Gastrocnemius medialis (tissue), 4 donors: ENCODE measurements at regions of chr4 and their contacts with region 1.

Region 1: DNA sequence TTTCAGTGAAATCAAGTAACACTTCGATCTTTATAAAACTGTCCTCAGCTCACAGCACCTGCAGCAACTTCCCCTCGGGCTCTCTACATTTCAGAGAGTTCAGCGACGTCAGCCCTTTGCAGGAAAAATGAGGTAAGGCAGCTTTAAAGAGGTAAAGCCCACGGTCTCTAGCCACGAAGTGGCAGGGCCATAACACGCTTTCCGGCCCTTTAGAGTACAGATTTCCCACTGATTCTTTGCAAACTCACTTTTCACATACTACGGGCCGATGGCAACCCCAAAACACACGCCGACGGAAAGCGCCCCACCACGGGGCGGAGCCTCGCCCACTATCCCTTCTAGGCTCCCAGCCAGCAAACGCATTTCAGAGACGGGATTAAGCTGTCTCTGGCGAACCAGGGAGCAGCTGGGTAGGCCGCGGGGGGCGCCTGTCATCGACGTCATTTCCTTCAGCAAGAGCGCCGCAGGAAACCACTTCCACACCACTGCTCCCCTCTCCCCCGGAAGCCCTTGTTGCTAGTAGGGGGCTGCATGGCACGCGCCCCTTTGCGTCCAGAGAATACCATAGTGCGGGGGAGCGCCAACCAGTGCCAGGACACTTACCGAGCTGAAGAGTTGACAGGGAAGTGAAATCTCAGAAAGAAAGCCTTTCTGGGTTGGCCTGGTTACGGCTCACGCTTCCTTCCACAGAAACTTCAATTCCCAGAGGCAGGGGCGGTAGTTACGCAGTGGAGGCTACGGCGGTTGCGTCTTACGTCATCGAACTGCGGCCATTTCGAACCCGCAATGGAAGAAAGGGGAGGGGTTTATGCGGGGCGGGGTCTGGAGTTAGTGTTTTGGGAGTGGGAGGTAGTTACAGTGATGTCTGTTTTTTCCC is at the start of gene TRMT10A:
- DNase-seq: peak; percentile 97 to 98
- ATAC-seq: peak; percentile 89 to 90
- H3K4me3 ChIP-seq: peak within 1 kb of the TSS; percentile 74 to 88 (median 80)
- H3K27ac ChIP-seq: peak within 1 kb of the TSS; percentile 94 to 97 (median 96)
- H3K4me1 ChIP-seq: peaks cover 19 to 22% of the 10 kb centered on the region in 2 donors
- H3K27me3 ChIP-seq: no peaks in the 10 kb centered on the region
- CTCF ChIP-seq: peak in 2 of 5 experiments; percentile 4 to 26
- POLR2A ChIP-seq: peak; percentile 52 to 66
- total RNA-seq, gene TRMT10A: 2.6 to 7.3 (median 5.9) TPM

Region 2: GRCh38 chr4:98341309-98341708 is 1222.2 kb before region 1 on chr4:
- in situ Hi-C with region 1: no loop called
- intact Hi-C with region 1: no loop called
- DNase-seq: no peak
- ATAC-seq: no peak
- H3K4me3 ChIP-seq: no peak overlapping the region
- H3K27ac ChIP-seq: no peak overlapping the region
- H3K4me1 ChIP-seq: no peaks in the 10 kb centered on the region
- H3K27me3 ChIP-seq: no peaks in the 10 kb centered on the region
- CTCF ChIP-seq: no peak
- POLR2A ChIP-seq: no peak

Region 3: GRCh38 chr4:99615170-99615820 is 51.7 kb after region 1 on chr4:
- in situ Hi-C with region 1: no loop called
- intact Hi-C with region 1: loop called (anchors 5 kb)
- DNase-seq: peak; percentile 8 to 35
- ATAC-seq: peak; percentile 62 to 79
- H3K4me3 ChIP-seq: no peak overlapping the region
- H3K27ac ChIP-seq: peak overlapping the region in 2 of 4 donors; percentile 48 to 64
- H3K4me1 ChIP-seq: peaks cover 33 to 43% of the 10 kb centered on the region in 2 donors
- H3K27me3 ChIP-seq: no peaks in the 10 kb centered on the region
- CTCF ChIP-seq: peak in 1 of 5 experiments; percentile 37
- POLR2A ChIP-seq: no peak

Region 4: DNA sequence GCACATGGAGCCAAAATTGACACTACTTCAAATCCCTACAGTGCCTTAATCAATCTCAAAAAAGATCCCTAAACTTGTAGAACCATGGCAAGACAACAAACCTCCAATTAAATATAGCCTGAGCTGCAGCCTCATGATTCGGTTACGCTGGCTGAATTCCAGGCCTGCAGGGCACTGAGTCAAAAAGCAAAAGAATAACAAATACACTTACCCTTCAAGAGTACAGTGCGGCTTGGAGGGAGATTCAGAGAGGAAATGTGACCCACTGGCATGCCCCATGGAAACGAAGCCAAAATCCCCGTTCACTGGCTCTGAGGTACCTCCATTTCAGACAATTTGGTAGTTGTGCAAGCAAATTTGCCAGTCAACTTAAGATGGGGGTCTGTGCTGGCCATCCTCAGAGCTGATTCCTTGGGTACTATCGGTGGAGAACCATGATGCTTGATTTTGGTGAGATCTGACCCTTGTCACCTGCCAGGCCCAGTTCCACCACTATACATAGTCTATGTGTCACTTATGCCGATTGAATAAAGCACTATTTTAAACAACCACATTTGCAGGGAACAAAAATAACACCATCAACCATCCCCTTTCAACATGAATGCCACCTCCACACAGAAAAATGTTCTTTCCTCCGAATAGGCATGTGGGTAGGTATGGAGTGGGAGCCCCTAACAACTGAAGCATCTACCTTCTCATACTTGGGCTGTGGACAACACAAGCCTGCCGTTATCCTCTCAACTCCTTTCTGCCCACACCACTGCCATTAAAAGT is 91.9 kb after region 1 on chr4:
- in situ Hi-C with region 1: loop called in 2 of 4 experiments (anchors 10 kb)
- intact Hi-C with region 1: loop called (anchors 5 kb)
- DNase-seq: peak; percentile 78 to 80
- ATAC-seq: peak; percentile 14 to 50
- H3K4me3 ChIP-seq: peak overlapping the region; percentile 62 to 75 (median 62)
- H3K27ac ChIP-seq: peak overlapping the region; percentile 94 to 99 (median 98)
- H3K4me1 ChIP-seq: peaks cover 47 to 55% of the 10 kb centered on the region in 2 donors
- H3K27me3 ChIP-seq: no peaks in the 10 kb centered on the region
- CTCF ChIP-seq: no peak
- POLR2A ChIP-seq: peak in 1 of 2 donors; percentile 30

Region 5: DNA sequence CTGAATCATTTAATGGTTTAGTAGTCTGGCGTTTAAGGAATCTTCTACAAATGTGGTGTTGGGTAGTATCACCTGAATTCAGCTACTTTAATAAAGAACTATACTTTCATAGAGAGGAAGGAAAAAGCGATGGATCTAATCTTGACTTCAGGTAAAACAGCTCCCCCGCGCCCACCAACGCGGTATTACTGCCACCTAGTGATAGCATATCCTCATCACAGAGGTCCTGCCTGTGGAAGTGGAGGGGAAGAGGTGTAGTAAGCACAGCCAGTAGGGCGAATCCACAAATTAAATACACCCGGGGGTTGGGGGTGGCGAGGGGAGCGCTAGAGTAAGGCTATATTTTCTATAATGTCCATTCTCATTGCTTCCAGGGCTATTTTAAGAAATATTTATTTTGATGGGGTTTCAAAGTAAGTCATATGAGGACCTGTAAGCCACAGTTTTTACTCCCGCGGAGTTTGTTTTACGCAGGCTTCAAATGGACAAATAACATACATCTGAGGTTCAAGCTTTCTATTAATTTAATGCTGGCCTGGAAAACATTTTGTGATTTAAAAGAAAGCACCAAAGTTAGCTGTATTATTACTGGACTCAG is 244.8 kb after region 1 on chr4:
- in situ Hi-C with region 1: loop called (anchors 5 to 10 kb)
- intact Hi-C with region 1: loop called (anchors 1 kb)
- DNase-seq: peak; percentile 55 to 77
- ATAC-seq: peak; percentile 85 to 94
- H3K4me3 ChIP-seq: no peak overlapping the region
- H3K27ac ChIP-seq: peak overlapping the region in 1 of 4 donors; percentile 51
- H3K4me1 ChIP-seq: peaks cover 18 to 21% of the 10 kb centered on the region in 2 donors
- H3K27me3 ChIP-seq: no peaks in the 10 kb centered on the region
- CTCF ChIP-seq: peak; percentile 74 to 82 (median 78)
- POLR2A ChIP-seq: no peak

Region 6: DNA sequence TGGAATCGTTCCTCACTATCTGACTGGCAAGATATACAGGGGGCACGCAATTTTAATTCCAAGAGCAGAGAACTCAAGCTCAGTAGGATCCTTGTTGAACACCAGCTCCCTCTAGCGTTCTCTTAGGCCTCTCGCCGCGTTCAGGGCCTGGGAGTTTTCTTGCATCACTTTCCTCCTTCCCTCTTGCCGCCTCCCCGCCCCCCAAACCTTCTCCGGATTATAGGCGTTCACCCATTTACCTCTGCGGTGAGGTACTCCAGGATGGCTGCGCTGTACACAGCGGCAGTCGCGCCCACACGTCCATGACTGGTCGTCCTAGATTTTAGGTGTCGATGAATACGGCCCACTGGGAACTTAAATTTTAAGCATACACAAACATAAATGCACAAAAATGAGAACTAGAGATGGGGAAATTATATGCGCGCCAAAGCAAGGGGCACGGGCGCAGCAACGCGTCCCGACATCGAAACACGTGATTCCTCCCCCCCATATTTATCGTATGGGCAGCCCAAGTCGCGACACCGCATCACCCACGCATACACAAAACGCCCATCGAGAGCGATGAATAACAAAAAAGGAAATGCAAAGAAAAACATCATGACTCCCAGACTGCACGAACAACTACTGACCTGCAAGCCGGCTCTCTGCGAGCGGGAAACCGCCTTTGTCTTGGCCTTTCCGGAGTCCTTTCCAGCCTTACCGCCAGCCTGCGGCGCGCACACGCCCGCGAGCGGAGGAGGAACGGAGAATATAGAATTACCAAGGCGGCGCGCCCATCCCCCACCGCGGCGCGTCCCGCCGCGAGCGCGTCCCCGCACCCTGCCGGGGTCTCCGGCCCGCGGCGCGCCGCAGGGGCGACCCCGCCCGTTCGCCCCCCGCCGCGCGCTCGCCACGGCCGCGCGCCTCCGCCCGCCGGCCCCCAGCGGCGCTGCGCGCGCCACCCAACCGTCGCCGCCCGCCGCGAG is 385.8 kb after region 1 on chr4:
- in situ Hi-C with region 1: loop called (anchors 5 to 25 kb)
- intact Hi-C with region 1: loop called (anchors 1 kb)
- DNase-seq: peak; percentile 81 to 89
- ATAC-seq: peak; percentile 56 to 67
- H3K4me3 ChIP-seq: peak overlapping the region; percentile 79 to 95 (median 86)
- H3K27ac ChIP-seq: peak overlapping the region; percentile 96 to 98 (median 98)
- H3K4me1 ChIP-seq: peaks cover 30 to 40% of the 10 kb centered on the region in 2 donors
- H3K27me3 ChIP-seq: no peaks in the 10 kb centered on the region
- CTCF ChIP-seq: peak; percentile 73 to 93 (median 80)
- POLR2A ChIP-seq: no peak